Endothelial cell of umbilical vein (primary cell): ENCODE measurements at regions of chr4 and their contacts with region 1.

Region 1: DNA sequence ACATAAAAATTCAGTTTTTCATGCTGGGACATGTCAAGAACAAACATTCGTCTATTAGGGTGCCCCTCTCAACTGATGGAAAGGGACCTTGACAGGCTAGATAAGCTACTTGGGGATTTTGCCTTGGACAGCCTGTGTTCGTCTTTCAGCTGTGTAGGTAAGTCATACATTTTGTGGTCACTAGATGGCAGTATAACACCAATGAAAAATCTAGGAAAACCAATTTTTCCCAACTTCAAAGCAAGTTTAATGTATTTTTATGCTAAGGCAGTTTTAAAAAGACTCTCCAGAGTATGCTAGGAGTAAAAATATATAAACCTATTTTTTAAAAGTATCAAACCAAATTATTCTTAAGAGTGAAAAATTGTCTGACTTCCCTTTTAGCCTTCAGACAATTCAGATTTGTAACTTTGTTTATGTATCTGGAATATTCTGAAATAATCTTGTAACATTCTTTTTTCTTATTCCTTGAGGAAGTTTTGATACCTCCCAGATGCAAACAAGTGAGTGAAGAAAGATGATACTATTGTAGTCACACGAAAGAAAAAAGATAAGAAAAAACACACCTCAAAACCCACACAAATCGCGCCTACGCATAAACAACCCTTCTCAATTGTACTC is 158.3 kb downstream of the CPE start:
- DNase-seq: peak; percentile 83
- H3K4me3 ChIP-seq: no peak overlapping the region
- H3K27ac ChIP-seq: no peak overlapping the region
- H3K4me1 ChIP-seq: no peaks in the 10 kb centered on the region
- H3K27me3 ChIP-seq: no peaks in the 10 kb centered on the region
- CTCF ChIP-seq: peak; percentile 34 to 47
- POLR2A ChIP-seq: no peak

Region 2: GRCh38 chr4:165152527-165152926 is 384.6 kb before region 1 on chr4:
- CTCF ChIA-PET with region 1: no interaction called
- POLR2A ChIA-PET with region 1: no interaction called
- dilution Hi-C with region 1: no loop called
- intact Hi-C with region 1: no loop called
- DNase-seq: no peak
- H3K4me3 ChIP-seq: no peak overlapping the region
- H3K27ac ChIP-seq: no peak overlapping the region
- H3K4me1 ChIP-seq: no peaks in the 10 kb centered on the region
- H3K27me3 ChIP-seq: no peaks in the 10 kb centered on the region
- CTCF ChIP-seq: no peak
- POLR2A ChIP-seq: no peak

Region 3: DNA sequence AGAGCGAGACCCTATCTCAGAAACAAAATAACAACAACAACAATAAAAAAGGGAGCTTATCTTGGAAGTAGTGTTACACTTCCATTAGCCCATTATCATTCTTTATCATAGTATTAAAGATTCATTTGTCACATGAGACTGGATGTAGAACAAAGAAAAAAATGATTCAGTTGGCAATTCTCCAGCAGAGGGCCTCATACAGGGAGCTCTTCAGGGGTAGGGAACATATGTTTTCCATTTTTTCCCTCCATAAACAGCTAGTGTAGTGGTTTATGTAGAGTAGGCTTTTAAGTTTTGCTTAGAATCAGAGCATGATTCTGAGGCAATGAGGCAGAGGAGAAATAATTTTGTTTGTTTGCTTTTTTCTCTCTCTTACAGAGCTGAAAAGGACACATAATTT is 152.5 kb before region 1 on chr4:
- CTCF ChIA-PET with region 1: no interaction called
- POLR2A ChIA-PET with region 1: no interaction called
- dilution Hi-C with region 1: no loop called
- intact Hi-C with region 1: no loop called
- DNase-seq: peak; percentile 18
- H3K4me3 ChIP-seq: no peak overlapping the region
- H3K27ac ChIP-seq: no peak overlapping the region
- H3K4me1 ChIP-seq: no peaks in the 10 kb centered on the region
- H3K27me3 ChIP-seq: no peaks in the 10 kb centered on the region
- CTCF ChIP-seq: no peak
- POLR2A ChIP-seq: no peak

Region 4: DNA sequence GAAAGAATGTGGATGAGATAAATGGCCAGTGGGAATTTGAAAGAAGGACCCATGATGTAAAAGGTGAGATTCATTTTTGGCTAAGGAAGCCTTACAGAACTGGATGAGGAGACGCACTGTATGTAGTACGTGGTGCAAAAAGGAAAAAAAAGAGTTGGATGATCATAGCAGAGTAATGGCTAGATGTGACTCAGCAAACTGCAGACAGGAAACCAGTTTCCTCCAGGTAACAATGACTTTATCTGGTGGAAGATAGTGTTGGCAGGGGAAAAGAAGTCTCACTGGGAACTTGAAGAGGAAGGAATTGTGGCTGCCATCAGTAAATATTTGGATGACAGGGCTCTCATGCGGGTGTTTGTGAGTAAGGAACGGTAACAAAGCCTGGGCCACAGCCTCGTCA is 84.8 kb after region 1 on chr4:
- CTCF ChIA-PET with region 1: no interaction called
- POLR2A ChIA-PET with region 1: no interaction called
- dilution Hi-C with region 1: no loop called
- intact Hi-C with region 1: loop called (anchors 5 kb)
- DNase-seq: peak; percentile 87
- H3K4me3 ChIP-seq: no peak overlapping the region
- H3K27ac ChIP-seq: peak overlapping the region; percentile 86
- H3K4me1 ChIP-seq: peaks cover 45% of the 10 kb centered on the region
- H3K27me3 ChIP-seq: no peaks in the 10 kb centered on the region
- CTCF ChIP-seq: no peak
- POLR2A ChIP-seq: no peak

Region 5: GRCh38 chr4:165700855-165701254 is 163.7 kb after region 1 on chr4:
- CTCF ChIA-PET with region 1: interaction called, 4 read pairs
- POLR2A ChIA-PET with region 1: no interaction called
- dilution Hi-C with region 1: no loop called
- intact Hi-C with region 1: loop called (anchors 2 kb)
- DNase-seq: no peak
- H3K4me3 ChIP-seq: no peak overlapping the region
- H3K27ac ChIP-seq: no peak overlapping the region
- H3K4me1 ChIP-seq: no peaks in the 10 kb centered on the region
- H3K27me3 ChIP-seq: no peaks in the 10 kb centered on the region
- CTCF ChIP-seq: peak; percentile 3 to 5
- POLR2A ChIP-seq: no peak

Region 6: DNA sequence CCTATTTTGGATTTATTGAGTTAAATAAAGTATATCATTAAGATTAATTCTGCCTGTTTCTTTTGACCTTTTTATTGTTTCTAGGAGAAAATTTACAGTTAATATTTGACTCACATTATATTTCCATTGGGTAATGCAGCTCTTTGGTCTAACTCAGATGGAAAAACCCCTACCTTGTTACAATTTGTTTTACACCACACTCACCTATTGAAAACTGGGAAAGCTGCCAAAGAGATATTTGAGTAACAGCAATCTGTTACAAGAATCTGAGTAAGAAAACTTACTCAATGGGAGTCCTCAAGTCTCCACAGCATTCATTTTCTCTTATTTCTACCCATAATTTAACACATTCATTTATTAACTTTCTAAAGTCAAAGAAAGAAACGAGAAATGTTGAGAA is 227.9 kb after region 1 on chr4:
- CTCF ChIA-PET with region 1: interaction called, 4 read pairs
- POLR2A ChIA-PET with region 1: no interaction called
- dilution Hi-C with region 1: no loop called
- intact Hi-C with region 1: loop called (anchors 1 kb)
- DNase-seq: peak; percentile 30
- H3K4me3 ChIP-seq: no peak overlapping the region
- H3K27ac ChIP-seq: no peak overlapping the region
- H3K4me1 ChIP-seq: peaks cover 39% of the 10 kb centered on the region
- H3K27me3 ChIP-seq: no peaks in the 10 kb centered on the region
- CTCF ChIP-seq: no peak
- POLR2A ChIP-seq: no peak

Region 7: GRCh38 chr4:165855191-165855590 is 318.1 kb after region 1 on chr4:
- CTCF ChIA-PET with region 1: interaction called, 7 read pairs
- POLR2A ChIA-PET with region 1: no interaction called
- dilution Hi-C with region 1: no loop called
- intact Hi-C with region 1: loop called (anchors 1 kb)
- DNase-seq: peak; percentile 16
- H3K4me3 ChIP-seq: no peak overlapping the region
- H3K27ac ChIP-seq: no peak overlapping the region
- H3K4me1 ChIP-seq: no peaks in the 10 kb centered on the region
- H3K27me3 ChIP-seq: no peaks in the 10 kb centered on the region
- CTCF ChIP-seq: no peak
- POLR2A ChIP-seq: no peak

Region 8: DNA sequence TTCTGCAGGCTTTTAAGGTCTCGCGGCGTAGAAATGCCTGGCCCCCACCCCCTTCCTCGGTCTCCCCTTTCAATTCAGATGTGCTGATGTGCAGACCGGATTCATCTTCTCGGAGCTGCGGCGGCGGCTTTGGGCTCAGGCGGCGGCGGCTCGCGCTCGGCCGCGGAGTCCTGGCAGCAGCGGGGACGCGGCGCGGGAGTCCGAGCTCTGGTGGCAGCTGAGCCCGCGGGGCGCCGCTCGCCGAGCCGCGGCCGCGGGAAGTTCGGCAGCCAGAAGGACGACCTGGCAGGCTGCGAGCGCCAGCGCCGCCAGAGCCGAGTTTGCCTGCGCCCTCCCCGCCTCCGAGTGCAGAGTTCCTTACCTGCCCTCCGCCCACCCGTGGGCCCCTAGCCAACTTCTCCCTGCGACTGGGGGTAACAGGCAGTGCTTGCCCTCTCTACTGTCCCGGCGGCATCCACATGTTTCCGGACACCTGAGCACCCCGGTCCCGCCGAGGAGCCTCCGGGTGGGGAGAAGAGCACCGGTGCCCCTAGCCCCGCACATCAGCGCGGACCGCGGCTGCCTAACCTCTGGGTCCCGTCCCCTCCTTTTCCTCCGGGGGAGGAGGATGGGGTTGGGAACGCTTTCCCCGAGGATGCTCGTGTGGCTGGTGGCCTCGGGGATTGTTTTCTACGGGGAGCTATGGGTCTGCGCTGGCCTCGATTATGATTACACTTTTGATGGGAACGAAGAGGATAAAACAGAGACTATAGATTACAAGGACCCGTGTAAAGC is 336.3 kb after region 1 on chr4:
- CTCF ChIA-PET with region 1: interaction called, 5 read pairs
- POLR2A ChIA-PET with region 1: no interaction called
- dilution Hi-C with region 1: no loop called
- intact Hi-C with region 1: loop called (anchors 1 kb)
- DNase-seq: no peak
- H3K4me3 ChIP-seq: peak overlapping the region; percentile 45 to 65 (median 58)
- H3K27ac ChIP-seq: peak overlapping the region; percentile 19
- H3K4me1 ChIP-seq: peaks cover 22% of the 10 kb centered on the region
- H3K27me3 ChIP-seq: peaks cover 0 to 2% of the 10 kb centered on the region in 2 experiments
- CTCF ChIP-seq: no peak
- POLR2A ChIP-seq: no peak

Region 9: GRCh38 chr4:166091912-166092510 is 554.9 kb after region 1 on chr4:
- CTCF ChIA-PET with region 1: interaction called, 31 read pairs
- POLR2A ChIA-PET with region 1: no interaction called
- dilution Hi-C with region 1: no loop called
- intact Hi-C with region 1: loop called (anchors 1 kb)
- DNase-seq: peak; percentile 43
- H3K4me3 ChIP-seq: no peak overlapping the region
- H3K27ac ChIP-seq: no peak overlapping the region
- H3K4me1 ChIP-seq: no peaks in the 10 kb centered on the region
- H3K27me3 ChIP-seq: no peaks in the 10 kb centered on the region
- CTCF ChIP-seq: peak; percentile 31 to 47
- POLR2A ChIP-seq: no peak